GM13976 (cell line): ENCODE measurements at regions of chr17 and their contacts with region 1.

Region 1: DNA sequence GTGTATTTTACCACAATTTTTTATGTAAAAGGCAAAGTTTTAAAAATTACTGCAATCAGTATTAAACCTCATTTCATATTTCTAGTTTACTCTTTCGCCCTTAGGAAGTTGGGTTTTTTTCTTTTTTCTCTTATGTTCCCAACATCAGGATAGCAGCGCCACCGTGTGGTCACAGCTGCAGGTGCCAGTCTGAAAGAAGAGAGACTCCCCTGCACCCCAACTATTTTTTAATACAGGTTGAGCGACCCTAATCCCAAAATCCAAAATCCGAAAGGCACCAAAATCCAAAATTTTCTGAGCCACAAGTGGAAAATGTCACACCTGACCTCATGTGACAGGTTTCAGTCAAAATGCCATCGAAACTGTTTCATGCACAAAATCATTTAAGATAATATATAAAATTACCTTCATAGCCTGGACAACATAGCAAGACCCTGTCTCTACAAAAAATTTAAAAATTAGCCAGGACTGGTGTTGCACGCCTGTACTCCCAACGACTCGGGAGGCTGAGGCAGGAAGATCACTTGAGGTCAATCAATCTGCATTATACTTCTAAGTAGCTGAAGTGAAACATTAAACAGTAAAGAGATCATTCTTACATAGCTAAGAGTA is 21.8 kb upstream of the ASGR2 start:
- DNase-seq: peak; percentile 76
- CTCF ChIP-seq: peak; percentile 86

Region 2: GRCh38 chr17:6611231-6611630 is 525.1 kb before region 1 on chr17:
- in situ Hi-C with region 1: no loop called
- DNase-seq: no peak
- CTCF ChIP-seq: no peak

Region 3: DNA sequence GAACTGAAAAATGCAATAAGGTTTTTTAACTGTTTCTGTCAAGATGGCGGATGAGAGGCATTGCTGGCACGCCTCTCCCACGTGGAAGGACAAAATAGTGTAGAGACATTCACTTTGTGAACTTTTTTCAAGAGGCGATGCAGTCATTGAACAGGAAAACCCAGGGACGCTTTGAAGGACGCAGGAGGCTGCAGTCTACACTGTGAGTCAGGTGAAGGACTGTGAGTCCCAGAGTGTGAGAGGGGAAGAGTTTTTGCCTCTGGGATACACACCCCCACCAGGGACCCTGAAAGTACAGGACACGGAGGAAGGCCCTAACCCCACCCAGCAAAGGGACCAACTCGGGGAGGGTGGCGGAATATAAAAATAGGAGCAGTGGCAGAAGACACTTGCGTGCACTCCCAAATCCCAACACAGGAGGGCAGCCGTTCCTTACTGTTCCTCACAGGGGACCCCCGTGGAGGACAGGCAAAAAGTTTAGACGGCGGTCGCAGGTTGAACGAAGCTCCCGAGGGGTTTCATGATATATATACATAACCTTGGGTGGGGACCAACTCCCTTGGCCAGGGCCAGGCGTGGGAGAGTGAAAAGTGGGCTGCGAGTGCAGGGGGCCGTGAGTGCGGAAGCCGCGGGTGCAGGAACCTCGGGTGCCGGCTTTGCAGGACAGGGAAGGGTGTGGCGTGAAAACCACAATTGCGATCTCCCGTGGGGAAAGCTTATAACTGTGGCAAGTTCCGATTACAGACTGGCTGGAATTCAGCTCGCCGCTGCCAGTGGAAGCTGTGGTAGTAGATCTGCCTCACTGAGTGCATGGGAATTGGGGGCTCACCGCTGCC is 222.5 kb before region 1 on chr17:
- in situ Hi-C with region 1: loop called (anchors 25 kb)
- DNase-seq: peak; percentile 82
- CTCF ChIP-seq: peak; percentile 80

Region 4: GRCh38 chr17:7045909-7046724 is 90.3 kb before region 1 on chr17:
- in situ Hi-C with region 1: loop called (anchors 5 kb)
- DNase-seq: no peak
- CTCF ChIP-seq: peak; percentile 63